ENCODE measurements at regions of chr16 and their contacts with region 1.

Region 1: GRCh38 chr16:8634991-8635736 is 13.7 kb downstream of the METTL22 start:
- DNase-seq: no peak
- ATAC-seq: no peak
- H3K4me3 ChIP-seq: no peak overlapping the region
- H3K27ac ChIP-seq: no peak overlapping the region
- H3K4me1 ChIP-seq: no peaks in the 10 kb centered on the region
- H3K27me3 ChIP-seq: no peaks in the 10 kb centered on the region

Region 2: GRCh38 chr16:8692502-8692901 is 57.3 kb after region 1 on chr16:
- intact Hi-C with region 1: loop called in 1 of 4 experiments (anchors 10 kb)
- DNase-seq: no peak
- ATAC-seq: no peak
- H3K4me3 ChIP-seq: no peak overlapping the region
- H3K27ac ChIP-seq: no peak overlapping the region
- H3K4me1 ChIP-seq: peaks cover 2% of the 10 kb centered on the region
- H3K27me3 ChIP-seq: no peaks in the 10 kb centered on the region

Region 3: DNA sequence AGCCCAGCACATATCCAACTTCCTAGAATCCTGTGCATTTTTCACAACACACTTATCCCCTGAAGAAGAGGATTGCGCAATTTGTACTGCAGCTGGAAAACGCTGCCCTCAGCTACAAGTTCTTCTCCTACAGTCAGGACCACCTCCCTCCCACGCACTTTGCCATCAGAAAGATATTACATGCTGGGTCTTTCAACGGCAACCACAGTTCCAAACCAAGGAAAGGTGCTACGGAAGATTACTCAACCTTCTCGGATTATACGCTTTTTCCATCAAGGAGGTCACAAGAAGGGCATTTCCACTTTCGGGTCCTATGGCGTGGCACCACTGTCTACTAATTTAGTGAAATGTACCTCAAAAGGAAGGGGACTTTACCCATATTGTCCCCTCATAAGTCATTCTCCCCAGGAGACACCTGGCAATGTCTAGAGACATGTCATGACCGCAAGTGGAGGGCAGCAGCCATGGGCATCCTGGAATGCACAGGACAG is 293.3 kb after region 1 on chr16:
- intact Hi-C with region 1: no loop called
- DNase-seq: peak in 1 of 3 donors; percentile 54
- ATAC-seq: peak; percentile 34 to 64
- H3K4me3 ChIP-seq: no peak overlapping the region
- H3K27ac ChIP-seq: no peak overlapping the region
- H3K4me1 ChIP-seq: peaks cover 11% of the 10 kb centered on the region
- H3K27me3 ChIP-seq: no peaks in the 10 kb centered on the region

Region 4: GRCh38 chr16:9099131-9099625 is 464.0 kb after region 1 on chr16:
- intact Hi-C with region 1: no loop called
- DNase-seq: no peak
- ATAC-seq: peak in 1 of 2 donors; percentile 34
- H3K4me3 ChIP-seq: no peak overlapping the region
- H3K27ac ChIP-seq: peak overlapping the region; percentile 30
- H3K4me1 ChIP-seq: peaks cover 15% of the 10 kb centered on the region
- H3K27me3 ChIP-seq: no peaks in the 10 kb centered on the region

Measured in right cardiac atrium (tissue), 5 donors.